Activated T-helper 1 cell treated with anti-CD3 and anti-CD28 coated beads, Interleukin-12 subunit alpha, Interleukin-12 subunit beta, Interleukin-2, Interleukin-4 antibody, amounts not matched to agents 30 ng/mL and 10 ng/mL and 1 ng/mL, durations not matched to agents 14 hours and 24 hours and 36 hours (primary cell): ENCODE measurements at regions of chrX and their contacts with region 1.

Region 1: DNA sequence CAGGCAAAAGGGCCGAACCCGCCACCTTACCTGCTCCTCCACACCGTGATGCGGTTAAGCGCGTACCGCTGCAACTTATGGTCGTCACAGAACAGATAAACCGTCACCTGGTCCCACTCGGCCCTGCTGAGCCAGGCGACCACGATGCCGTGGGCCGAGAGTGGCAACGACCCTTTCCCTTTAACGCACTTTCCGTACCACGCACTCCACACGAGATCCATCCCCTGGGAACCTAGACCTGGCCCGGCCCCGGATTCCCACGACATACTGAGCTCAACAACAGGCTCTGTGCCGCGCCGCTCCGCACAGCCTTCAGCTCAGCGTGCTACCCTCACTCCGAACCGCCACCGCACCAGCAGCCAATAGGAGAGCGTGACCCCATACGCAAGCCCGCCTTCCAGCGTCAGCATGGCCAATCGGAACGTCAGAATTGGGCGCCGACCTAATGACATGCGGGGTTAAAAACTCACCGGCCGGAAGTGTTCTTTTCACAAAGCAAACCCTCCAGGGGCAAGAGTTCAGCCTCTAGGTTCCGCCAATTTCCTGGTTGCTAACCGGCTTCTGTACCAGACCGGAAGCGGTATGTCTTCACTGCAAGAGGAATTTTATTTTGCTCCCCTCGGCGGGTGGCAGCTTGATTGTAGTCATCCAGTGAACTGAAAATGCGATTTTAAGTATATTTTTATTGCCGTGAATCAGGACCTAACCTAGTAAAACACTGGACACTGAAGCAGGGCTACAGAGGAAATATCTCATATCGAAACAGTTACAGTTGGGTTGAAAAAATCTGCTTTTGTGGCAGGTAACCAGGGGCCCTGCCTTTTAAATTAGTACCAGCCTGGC is at the start of gene LAS1L:
- DNase-seq: peak; percentile 88
- H3K4me3 Mint-ChIP-seq: peak within 1 kb of the TSS; percentile 100
- H3K27ac Mint-ChIP-seq: peak within 1 kb of the TSS; percentile 100
- H3K4me1 Mint-ChIP-seq: peaks cover 14% of the 10 kb centered on the region
- H3K27me3 Mint-ChIP-seq: peaks cover 2% of the 10 kb centered on the region
- total RNA-seq, gene LAS1L: 62.5 and 65.1 TPM in 2 replicates

Region 2: DNA sequence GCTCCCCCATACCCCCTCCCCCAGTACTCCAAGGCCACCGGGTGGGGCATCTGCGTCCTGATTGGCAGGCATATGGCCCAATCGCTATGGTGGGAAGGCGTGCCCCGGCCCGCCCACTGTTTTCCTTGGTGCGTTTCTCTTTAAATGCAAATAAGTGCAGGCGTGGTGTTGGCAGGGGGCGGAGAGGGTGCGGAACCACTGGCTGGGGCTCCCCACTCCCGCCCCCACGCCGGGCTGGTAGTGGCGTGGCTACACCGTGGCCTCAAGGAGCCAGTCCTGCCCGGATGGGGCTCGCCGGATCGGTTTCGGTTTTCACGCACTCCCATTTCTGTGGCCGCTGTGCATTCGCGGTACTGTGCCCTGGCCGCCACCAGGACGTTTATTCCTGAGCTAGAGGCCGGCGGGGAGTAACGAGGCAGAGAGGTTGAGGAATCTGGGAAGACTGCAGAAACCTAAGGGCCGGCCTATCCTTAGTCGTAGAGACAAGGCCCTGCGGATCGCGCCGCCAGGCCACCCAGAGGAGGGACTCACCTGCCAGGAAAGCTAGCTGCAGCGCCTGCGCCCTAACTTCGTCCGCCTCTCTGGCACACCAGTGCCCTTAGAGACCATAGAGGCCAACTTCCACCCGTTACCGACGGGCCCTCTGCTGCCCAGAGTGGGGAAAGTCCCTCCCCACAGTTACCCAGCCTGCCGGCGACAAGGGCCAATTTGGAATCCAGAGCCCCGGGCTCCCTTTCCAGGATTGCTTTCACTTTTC is 1328.8 kb before region 1 on chrX:
- intact Hi-C with region 1: loop called (anchors 5 kb)
- DNase-seq: peak; percentile 86
- H3K4me3 Mint-ChIP-seq: peak overlapping the region; percentile 85
- H3K27ac Mint-ChIP-seq: peak overlapping the region; percentile 87
- H3K4me1 Mint-ChIP-seq: peaks cover 10% of the 10 kb centered on the region
- H3K27me3 Mint-ChIP-seq: no peaks in the 10 kb centered on the region

Region 3: DNA sequence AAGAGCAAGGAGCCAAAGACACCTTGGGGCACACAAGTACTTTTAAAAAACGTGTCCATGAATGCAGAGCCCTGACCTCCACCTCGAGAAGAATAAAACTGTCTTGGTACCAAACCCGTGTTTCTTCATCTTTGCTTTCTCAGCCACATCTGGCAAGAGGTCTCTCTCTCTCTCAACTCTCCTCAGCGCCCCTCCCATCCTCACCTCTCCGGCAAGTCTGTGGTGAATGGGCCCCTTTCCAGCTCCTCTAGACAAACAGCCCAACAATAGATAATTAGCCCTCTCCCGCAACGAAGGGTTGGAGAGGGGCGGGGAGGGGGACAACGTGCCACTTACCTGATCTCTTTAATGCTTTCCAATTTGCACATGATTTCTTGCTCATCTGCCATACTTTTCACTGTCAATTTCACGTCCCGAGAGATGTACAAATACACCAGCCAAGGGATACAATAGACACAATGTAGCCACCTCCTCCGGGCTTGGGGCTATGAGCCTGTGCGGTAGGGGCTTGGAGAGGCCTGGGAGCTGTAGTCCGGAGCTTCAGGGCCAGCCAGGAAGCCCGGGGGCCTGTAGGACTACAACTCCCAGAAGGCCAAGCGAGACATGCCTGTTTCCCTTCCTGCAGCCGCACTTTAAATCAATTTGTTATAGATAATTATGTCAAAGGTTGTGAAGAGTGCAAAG is 558.5 kb before region 1 on chrX and contains the start of gene ZC4H2:
- intact Hi-C with region 1: loop called (anchors 1 kb)
- DNase-seq: peak; percentile 50
- H3K4me3 Mint-ChIP-seq: peak within 1 kb of the TSS; percentile 92
- H3K27ac Mint-ChIP-seq: peak within 1 kb of the TSS; percentile 80
- H3K4me1 Mint-ChIP-seq: peaks cover 19% of the 10 kb centered on the region
- H3K27me3 Mint-ChIP-seq: peaks cover 5% of the 10 kb centered on the region
- total RNA-seq, gene ZC4H2: 11.6 and 12.1 TPM in 2 replicates

Region 4: DNA sequence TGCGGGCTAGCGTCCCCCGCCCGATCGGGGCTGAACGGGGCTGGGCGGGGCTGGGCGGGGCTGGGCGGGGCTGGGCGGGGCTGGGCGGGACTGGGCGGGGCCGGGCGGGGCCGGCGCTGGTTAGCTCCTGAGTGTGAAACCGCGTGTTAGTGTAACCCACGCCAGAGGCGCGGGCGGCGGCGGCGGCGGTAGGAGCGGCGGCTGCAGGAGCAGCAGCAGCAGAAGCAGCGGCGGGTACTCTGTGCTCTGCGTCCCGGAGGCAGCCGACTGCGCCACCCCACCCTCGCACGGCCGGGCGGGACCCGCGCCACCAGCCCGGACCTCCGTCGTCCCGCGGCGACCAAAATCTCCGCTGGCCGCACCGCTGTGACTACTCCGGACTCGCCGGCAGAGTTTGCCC is 128.1 kb before region 1 on chrX:
- intact Hi-C with region 1: loop called (anchors 5 kb)
- DNase-seq: peak; percentile 2
- H3K4me3 Mint-ChIP-seq: peak overlapping the region; percentile 54
- H3K27ac Mint-ChIP-seq: no peak overlapping the region
- H3K4me1 Mint-ChIP-seq: no peaks in the 10 kb centered on the region
- H3K27me3 Mint-ChIP-seq: peaks cover 30% of the 10 kb centered on the region

Region 5: DNA sequence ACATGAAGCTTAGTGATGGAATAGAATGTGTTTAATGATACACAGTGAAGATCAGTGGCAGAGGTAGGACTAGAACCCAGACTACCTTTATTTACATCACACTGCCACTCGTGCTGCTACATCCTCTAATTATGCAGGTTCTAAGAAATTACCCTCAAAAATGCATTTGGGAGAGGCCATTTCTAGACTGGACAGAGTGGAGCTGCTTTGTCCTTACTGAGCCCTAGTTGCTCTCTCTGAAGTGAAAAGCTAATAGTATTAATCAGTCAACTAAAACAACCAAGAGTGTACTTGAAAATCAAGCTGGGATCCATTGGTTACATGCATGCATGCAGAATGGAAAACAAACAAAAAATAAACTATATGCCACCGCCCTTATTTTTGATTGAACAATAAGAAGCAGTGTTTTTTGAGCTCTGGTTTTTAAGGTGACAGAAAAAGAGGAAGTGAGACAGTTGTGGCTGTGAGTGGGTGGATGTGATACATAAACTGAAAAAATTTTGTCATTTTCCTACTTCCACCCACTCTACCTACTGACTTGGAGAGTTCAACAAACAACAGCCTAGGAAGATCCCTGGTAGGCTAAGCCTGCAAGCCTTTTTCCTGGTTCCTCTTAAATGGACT is 512.1 kb after region 1 on chrX:
- intact Hi-C with region 1: loop called (anchors 2 kb)
- DNase-seq: peak; percentile 14
- H3K4me3 Mint-ChIP-seq: peak overlapping the region; percentile 69
- H3K27ac Mint-ChIP-seq: peak overlapping the region; percentile 100
- H3K4me1 Mint-ChIP-seq: peaks cover 40% of the 10 kb centered on the region
- H3K27me3 Mint-ChIP-seq: no peaks in the 10 kb centered on the region